Testis (tissue), 5 donors: ENCODE measurements at regions of chr11 and their contacts with region 1.

Region 1: DNA sequence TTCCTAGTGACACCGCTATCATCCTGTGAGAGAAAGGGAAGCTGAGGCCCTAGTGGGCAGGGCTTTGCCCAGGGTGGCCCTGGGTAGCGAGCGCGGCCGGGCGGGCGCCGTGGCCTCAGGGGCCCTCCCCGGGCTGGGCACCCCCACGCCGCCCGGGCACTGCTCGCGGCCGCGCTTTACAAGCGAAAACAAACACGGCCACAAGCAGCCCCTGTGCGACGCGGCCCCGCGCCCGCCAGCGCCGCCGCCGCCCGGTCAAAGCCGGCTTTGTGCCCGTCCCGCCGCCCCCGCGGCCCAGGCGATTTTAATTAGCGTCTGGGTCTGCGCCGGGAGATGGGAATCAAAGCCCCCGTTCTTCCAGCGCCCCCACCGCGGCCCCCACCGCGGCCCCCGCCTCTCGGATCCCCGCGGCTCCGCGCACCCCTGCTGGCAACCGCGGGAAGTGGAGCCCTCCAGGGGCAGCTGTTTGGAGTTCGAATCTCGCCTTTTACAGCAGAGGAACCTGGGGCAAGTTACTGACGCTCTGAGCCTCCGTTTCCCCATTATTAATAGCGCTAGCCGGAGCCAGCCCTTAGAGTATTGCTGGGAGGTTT is 47.9 kb downstream of the CHRDL2 start:
- DNase-seq: peak; percentile 30
- H3K4me3 ChIP-seq: peak overlapping the region; percentile 49 to 56
- H3K27ac ChIP-seq: no peak overlapping the region
- H3K4me1 ChIP-seq: peaks cover 3% of the 10 kb centered on the region
- H3K27me3 ChIP-seq: no peaks in the 10 kb centered on the region
- CTCF ChIP-seq: peak; percentile 17 to 52 (median 19)
- POLR2A ChIP-seq: no peak

Region 2: DNA sequence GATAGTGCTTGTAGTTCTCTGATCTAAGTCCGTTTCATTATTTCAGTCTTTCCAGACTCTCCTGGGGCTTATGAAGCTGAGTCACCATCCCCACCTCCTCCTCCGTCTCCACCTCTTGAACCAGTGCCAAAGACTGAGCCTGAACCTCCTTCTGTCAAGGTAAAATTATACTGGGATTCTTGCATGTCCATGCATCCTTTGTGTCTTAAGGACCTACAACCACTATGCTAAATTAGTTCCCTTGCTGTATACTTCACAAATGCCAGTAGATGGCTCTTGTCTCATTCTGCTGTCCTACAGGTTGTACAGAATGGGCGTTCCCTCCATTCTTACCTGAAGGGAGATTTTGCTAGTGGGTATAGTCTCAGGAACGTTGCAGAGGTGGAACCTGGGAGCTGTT is 48.8 kb before region 1 on chr11:
- intact Hi-C with region 1: loop called (anchors 5 kb)
- DNase-seq: no peak
- H3K4me3 ChIP-seq: no peak overlapping the region
- H3K27ac ChIP-seq: no peak overlapping the region
- H3K4me1 ChIP-seq: peaks cover 7% of the 10 kb centered on the region
- H3K27me3 ChIP-seq: no peaks in the 10 kb centered on the region
- CTCF ChIP-seq: no peak
- POLR2A ChIP-seq: no peak